ENCODE measurements at regions of chr4 and their contacts with region 1.

Region 1: DNA sequence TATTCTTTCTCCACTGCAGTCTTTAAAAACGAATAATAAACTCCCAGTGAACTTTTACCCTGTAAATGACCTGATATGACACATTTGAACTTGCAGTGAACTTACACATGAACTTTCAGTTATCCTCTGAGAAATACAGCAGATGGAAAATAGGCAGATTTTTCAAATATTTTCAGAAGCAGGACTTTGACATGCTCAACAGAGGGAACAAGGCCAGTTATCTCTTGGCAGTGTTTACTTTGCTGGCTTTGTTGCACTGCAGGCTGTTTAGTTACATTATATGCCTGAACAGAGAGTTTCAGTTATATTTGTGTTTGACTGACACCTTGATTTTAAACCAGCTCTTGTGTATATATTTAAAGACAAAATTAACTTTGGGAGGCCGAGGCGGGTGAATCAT is 47.6 kb upstream of the FGG start:
- DNase-seq: no peak
- ATAC-seq: no peak

Region 2: DNA sequence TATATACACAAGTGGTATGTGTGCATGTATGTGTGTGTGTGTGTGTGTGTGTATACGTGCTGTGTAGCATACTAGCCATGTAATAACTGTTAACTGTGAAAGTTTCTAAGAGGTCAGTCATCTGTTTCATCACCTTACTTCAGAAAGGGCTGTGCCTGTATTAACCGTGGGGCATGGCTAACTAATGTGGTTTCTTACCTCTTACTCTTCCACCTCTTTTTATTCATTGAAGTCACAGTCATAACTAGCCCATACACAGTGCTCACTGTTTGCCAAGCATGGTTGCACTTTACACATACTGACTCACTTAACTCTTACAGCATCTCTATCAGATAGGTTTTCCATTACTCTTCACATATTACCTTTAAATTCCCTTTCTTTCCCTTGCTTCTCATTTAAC is 60.1 kb after region 1 on chr4:
- intact Hi-C with region 1: loop called (anchors 2 kb)
- DNase-seq: no peak
- ATAC-seq: no peak

Region 3: GRCh38 chr4:155657169-155657568 is 997.1 kb after region 1 on chr4:
- intact Hi-C with region 1: no loop called
- DNase-seq: no peak
- ATAC-seq: no peak

Measured in sciatic nerve (tissue), 2 donors.